Endothelial cell of umbilical vein (primary cell): ENCODE measurements at regions of chr2 and their contacts with region 1.

Region 1: GRCh38 chr2:26745609-26746327 is 18.3 kb upstream of the SLC35F6 start:
- DNase-seq: peak; percentile 69
- H3K4me3 ChIP-seq: no peak overlapping the region
- H3K27ac ChIP-seq: no peak overlapping the region
- H3K4me1 ChIP-seq: no peaks in the 10 kb centered on the region
- H3K27me3 ChIP-seq: no peaks in the 10 kb centered on the region
- CTCF ChIP-seq: peak; percentile 87 to 88
- POLR2A ChIP-seq: no peak

Region 2: GRCh38 chr2:26598336-26598995 is 147.3 kb before region 1 on chr2:
- CTCF ChIA-PET with region 1: interaction called, 353 read pairs
- POLR2A ChIA-PET with region 1: no interaction called
- dilution Hi-C with region 1: no loop called
- intact Hi-C with region 1: no loop called
- DNase-seq: no peak
- H3K4me3 ChIP-seq: no peak overlapping the region
- H3K27ac ChIP-seq: no peak overlapping the region
- H3K4me1 ChIP-seq: peaks cover 9% of the 10 kb centered on the region
- H3K27me3 ChIP-seq: peaks cover 17 to 28% of the 10 kb centered on the region in 2 experiments
- CTCF ChIP-seq: no peak
- POLR2A ChIP-seq: no peak

Region 3: DNA sequence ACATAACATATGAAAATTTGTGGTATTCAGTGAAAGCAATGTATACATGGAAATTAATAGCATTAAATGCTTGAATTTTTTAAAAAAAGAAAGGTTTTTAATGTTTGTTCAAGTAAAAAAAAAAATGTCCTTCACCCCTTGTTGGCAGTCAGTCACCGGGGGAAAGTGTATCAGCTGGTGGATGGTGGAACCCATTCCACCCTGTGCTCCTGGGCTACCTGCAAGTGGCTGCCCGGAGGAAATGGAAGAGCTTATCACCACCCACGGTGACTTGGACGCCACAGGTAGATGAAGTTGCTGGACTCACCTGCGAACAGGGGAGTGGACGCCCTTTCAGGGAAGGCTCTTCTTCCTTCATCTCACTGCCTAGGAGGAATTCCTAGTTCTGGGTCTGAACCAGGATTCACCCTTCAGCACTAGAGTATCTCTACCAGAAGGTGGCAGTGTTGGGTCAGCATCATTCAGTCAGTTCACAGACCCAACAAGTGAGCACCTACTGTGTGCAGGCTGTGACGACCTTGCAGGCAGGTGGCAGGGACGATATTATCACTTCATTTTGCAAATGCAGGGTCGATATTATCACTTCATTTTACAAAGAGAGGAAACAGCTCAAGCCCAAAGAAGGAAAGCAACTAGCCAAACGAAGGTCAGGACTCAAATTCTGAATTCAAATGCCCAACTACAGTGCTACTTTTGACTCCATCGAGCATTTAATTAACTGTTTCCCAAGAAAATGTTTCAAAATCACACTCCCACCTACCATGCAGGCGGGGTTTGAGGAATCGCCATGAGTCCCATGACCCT is 140.4 kb before region 1 on chr2:
- CTCF ChIA-PET with region 1: interaction called, 353 read pairs
- POLR2A ChIA-PET with region 1: no interaction called
- dilution Hi-C with region 1: no loop called
- intact Hi-C with region 1: loop called (anchors 1 kb)
- DNase-seq: peak; percentile 52
- H3K4me3 ChIP-seq: no peak overlapping the region
- H3K27ac ChIP-seq: no peak overlapping the region
- H3K4me1 ChIP-seq: no peaks in the 10 kb centered on the region
- H3K27me3 ChIP-seq: peaks cover 9 to 15% of the 10 kb centered on the region in 2 experiments
- CTCF ChIP-seq: peak; percentile 73 to 77
- POLR2A ChIP-seq: no peak

Region 4: DNA sequence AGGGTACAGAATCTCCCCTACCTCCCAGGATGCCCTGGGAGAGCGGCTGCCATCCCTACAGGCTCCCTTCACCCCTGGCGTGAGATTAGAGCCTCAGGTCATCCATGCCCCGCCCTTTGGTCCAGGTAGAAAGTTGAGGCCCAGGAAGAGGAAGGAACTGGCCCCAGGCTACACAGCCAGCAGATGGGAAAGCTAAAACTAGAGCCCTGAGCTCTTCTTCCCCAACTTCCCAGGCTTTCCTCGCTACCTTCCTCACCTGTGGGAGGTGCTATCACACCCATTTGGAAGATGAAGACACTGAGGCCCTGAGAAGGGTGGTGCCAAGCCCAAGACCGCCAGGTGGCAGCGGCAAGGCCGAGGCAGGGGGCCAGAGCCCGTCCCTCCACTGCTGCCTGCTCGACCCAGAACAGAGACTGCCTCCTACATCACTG is 130.4 kb before region 1 on chr2:
- CTCF ChIA-PET with region 1: interaction called, 18 read pairs
- POLR2A ChIA-PET with region 1: no interaction called
- dilution Hi-C with region 1: no loop called
- intact Hi-C with region 1: no loop called
- DNase-seq: no peak
- H3K4me3 ChIP-seq: no peak overlapping the region
- H3K27ac ChIP-seq: no peak overlapping the region
- H3K4me1 ChIP-seq: no peaks in the 10 kb centered on the region
- H3K27me3 ChIP-seq: peaks cover 8 to 29% of the 10 kb centered on the region in 2 experiments
- CTCF ChIP-seq: no peak
- POLR2A ChIP-seq: no peak

Region 5: DNA sequence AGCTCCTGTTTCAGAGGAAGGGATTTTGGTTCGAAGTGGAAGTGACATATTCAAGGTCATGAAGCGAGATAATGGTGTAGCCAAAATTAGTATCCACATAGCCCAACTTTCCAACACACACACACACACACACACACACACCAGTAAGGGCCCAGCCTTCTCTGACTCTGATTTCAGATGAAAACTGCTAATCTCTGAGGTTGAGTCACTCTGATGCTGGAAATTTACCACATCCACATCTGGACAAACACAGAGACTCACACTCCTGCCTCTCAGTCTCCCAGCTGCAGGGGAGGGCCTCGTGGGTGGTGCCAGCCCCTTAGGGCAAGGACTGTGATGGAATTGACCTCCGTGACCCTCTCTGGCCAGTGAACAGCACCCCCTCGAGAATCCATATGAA is 10.7 kb before region 1 on chr2:
- CTCF ChIA-PET with region 1: interaction called, 39 read pairs
- POLR2A ChIA-PET with region 1: no interaction called
- dilution Hi-C with region 1: no loop called
- intact Hi-C with region 1: no loop called
- DNase-seq: no peak
- H3K4me3 ChIP-seq: no peak overlapping the region
- H3K27ac ChIP-seq: no peak overlapping the region
- H3K4me1 ChIP-seq: peaks cover 3% of the 10 kb centered on the region
- H3K27me3 ChIP-seq: peaks cover 0 to 4% of the 10 kb centered on the region in 2 experiments
- CTCF ChIP-seq: no peak
- POLR2A ChIP-seq: no peak

Region 6: DNA sequence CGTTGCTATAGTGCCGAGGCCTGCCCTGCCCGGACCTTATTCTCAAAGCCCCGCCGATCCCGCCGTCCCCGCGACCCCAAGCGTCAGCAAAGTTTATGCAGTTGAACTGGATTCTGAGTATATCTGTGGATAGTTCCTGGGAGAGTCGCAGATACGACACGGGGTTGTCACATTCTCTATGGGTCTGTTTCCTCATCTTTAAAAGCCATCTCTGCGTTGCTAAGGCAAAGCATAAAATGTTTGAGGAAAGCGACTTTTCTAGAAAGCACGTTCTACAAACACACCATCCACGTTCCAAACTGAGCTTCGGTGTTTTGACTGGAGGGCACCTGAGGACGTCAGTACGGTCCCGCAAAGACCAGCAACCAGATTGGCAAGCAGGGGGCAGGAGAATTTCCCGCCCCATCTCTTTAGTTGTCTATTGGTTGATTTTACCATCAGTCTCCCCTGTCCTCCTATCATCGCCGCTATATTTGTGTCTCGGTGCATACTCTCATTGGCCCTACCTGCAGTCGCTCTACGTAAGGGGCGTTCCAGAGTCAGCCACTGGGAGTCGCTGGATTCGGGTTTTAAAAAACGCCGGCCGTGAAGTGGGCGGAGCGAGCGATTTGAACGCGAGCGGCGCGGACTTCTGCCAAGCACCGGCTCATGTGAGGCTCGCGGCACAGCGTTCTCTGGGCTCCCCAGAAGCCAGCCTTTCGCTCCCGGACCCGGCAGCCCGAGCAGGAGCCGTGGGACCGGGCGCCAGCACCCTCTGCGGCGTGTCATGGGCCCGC is 39.9 kb after region 1 on chr2 and contains the start of gene CENPA:
- CTCF ChIA-PET with region 1: interaction called, 10 read pairs
- POLR2A ChIA-PET with region 1: no interaction called
- dilution Hi-C with region 1: no loop called
- intact Hi-C with region 1: no loop called
- DNase-seq: peak; percentile 100
- H3K4me3 ChIP-seq: peak within 1 kb of the TSS; percentile 63 to 96 (median 81)
- H3K27ac ChIP-seq: peak within 1 kb of the TSS; percentile 55
- H3K4me1 ChIP-seq: peaks cover 13% of the 10 kb centered on the region
- H3K27me3 ChIP-seq: no peaks in the 10 kb centered on the region
- CTCF ChIP-seq: peak in 1 of 2 donors; percentile 14
- POLR2A ChIP-seq: peak; percentile 57
- total RNA-seq, gene CENPA: 33.1 and 34.1 TPM in 2 replicates

Region 7: DNA sequence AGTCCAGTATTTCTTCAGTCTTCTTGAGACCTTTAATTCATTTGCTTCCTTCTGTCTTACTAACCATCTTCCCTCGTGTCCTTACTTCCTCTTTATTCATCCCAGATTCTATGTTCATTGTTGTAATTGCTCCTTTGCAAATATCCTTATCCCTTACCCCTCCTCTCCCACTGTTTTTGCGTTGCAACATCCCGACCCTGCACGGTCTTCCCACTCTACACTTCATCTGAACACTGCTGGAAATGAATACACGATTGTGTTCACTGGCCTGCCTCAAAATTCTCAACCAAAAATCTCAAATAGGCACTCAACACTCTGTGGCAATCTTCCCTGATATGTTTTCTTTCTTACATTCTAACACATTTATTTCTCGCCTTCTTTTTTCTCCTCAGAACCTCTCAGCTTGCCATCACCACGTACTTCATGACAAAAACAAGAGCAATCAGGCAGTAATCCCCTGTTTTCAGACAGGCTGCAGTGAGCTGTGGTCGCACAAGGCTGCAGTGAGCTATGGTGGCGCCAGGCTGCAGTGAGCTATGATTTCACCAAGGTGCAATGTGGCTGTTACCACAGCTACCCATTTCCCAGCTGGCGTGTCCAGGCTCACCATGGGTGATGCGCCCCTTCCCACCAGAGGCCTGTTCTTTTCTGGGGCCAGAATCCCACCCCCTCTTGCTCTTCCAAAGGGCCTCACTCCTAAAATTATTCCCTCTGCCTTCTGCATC is 428.7 kb after region 1 on chr2:
- CTCF ChIA-PET with region 1: no interaction called
- POLR2A ChIA-PET with region 1: no interaction called
- dilution Hi-C with region 1: no loop called
- intact Hi-C with region 1: no loop called
- DNase-seq: no peak
- H3K4me3 ChIP-seq: no peak overlapping the region
- H3K27ac ChIP-seq: no peak overlapping the region
- H3K4me1 ChIP-seq: no peaks in the 10 kb centered on the region
- H3K27me3 ChIP-seq: peaks cover 30 to 34% of the 10 kb centered on the region in 2 experiments
- CTCF ChIP-seq: no peak
- POLR2A ChIP-seq: no peak